Activated CD4-positive, alpha-beta memory T cell treated with anti-CD3 and anti-CD28 coated beads for 36 hours (primary cell): ENCODE measurements at regions of chr3 and their contacts with region 1.

Region 1: DNA sequence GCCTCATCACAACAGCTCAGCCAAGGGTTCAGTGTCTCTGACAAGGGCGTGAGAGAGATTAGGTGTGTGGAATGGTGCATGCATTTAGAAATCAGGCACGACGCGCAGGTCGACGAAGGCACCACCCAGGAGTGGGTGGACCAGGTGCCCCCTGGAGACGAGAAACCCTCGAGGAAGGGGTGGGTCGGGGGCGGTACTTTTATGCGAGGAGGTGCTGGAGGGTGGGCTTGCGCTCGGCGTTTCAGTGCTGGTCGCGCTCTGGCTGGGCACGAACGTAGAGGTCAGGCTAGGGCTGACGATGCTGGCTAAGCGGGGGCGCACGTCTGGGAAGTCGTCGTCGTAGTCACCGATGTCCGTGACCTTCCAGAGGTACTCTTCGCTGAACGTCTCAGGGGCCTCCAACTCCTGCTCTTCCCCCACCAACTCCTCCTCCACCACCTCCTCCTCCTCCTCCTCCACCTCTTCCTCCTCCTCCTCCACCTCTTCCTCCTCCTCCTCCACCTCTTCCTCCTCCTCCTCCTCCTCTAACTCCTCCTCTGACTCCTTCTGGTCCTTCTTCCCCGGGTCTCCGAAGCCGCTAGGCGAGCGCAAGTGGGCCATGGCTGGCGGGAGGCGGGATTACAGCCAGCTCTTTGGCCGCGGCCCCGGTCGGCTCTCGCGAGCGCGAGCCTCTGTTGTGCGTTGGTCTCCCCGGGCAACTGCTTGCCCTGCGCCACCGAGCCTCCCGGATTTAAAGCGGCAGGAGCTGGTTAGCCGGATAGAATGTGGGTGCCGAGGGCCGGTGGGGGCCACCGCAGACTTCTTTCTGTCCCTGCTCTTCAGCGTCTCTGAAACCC is at the start of gene ERICH6:
- DNase-seq: peak; percentile 92
- H3K4me3 Mint-ChIP-seq: peak within 1 kb of the TSS; percentile 89
- H3K27ac Mint-ChIP-seq: peak within 1 kb of the TSS; percentile 81
- H3K4me1 Mint-ChIP-seq: peaks cover 21% of the 10 kb centered on the region
- H3K27me3 Mint-ChIP-seq: no peaks in the 10 kb centered on the region
- total RNA-seq, gene ERICH6: not detected

Region 2: GRCh38 chr3:150528354-150528797 is 175.1 kb before region 1 on chr3:
- CTCF ChIA-PET with region 1: interaction called, 3 read pairs
- POLR2A ChIA-PET with region 1: no interaction called
- intact Hi-C with region 1: loop called (anchors 5 kb)
- DNase-seq: no peak
- H3K4me3 Mint-ChIP-seq: no peak overlapping the region
- H3K27ac Mint-ChIP-seq: no peak overlapping the region
- H3K4me1 Mint-ChIP-seq: peaks cover 6% of the 10 kb centered on the region
- H3K27me3 Mint-ChIP-seq: no peaks in the 10 kb centered on the region

Region 3: GRCh38 chr3:150603153-150603979 is 100.2 kb before region 1 on chr3 and contains the start of gene SELENOT:
- CTCF ChIA-PET with region 1: no interaction called
- POLR2A ChIA-PET with region 1: interaction called, 3 read pairs
- intact Hi-C with region 1: loop called (anchors 1 kb)
- DNase-seq: peak; percentile 96
- H3K4me3 Mint-ChIP-seq: peak within 1 kb of the TSS; percentile 96
- H3K27ac Mint-ChIP-seq: peak within 1 kb of the TSS; percentile 97
- H3K4me1 Mint-ChIP-seq: peaks cover 51% of the 10 kb centered on the region
- H3K27me3 Mint-ChIP-seq: no peaks in the 10 kb centered on the region
- total RNA-seq, gene SELENOT: 105 to 111 TPM

Region 4: GRCh38 chr3:150635526-150635925 is 68.0 kb before region 1 on chr3:
- CTCF ChIA-PET with region 1: no interaction called
- POLR2A ChIA-PET with region 1: no interaction called
- intact Hi-C with region 1: loop called (anchors 5 kb)
- DNase-seq: no peak
- H3K4me3 Mint-ChIP-seq: no peak overlapping the region
- H3K27ac Mint-ChIP-seq: peak overlapping the region; percentile 72
- H3K4me1 Mint-ChIP-seq: peaks cover 29% of the 10 kb centered on the region
- H3K27me3 Mint-ChIP-seq: no peaks in the 10 kb centered on the region